ENCODE measurements at regions of chr14 and their contacts with region 1.

Region 1: GRCh38 chr14:105384738-105385637 is 13.3 kb upstream of the TEX22 start:
- DNase-seq: no peak
- H3K4me3 ChIP-seq: no peak overlapping the region
- CTCF ChIP-seq: no peak
- POLR2A ChIP-seq: no peak

Region 2: DNA sequence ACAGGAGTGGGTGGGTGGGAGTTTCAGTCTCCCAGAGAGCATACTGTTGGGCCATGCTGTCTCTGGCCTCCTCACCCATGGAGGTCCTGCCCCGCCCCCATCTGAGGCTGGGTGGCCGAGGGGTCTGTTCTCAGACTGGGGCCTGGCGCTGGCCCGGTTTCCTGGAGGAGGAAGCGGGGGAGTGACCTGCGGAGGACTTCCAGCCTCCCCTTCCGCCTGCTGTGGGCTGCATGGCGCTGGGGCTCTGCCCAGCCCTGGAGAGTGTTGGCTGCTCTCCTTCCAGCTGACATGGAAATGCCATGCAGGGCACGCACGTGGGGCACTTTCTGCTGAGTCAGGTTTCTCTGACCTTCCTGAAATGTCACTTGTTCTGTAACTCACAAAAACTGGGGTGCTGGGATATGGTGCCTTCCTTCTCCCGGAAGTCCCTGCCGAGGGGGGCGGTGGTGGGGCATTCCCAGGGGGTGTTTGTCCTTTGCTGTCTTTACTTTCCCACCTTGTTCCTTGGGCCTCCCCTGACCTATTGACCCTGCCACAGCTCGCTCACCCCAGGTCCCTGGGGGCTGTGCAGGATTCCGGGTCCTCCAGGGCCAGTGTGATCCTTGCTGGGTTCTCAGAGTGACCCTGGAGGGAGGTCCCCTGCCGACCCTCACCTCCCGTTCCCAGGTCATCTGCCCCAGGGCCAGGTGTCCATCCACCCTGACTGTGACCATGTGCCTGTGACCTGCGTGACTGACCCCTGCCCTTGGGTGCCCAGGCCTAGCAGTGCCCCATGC is 46.8 kb before region 1 on chr14:
- intact Hi-C with region 1: no loop called
- DNase-seq: no peak
- H3K4me3 ChIP-seq: no peak overlapping the region
- CTCF ChIP-seq: no peak
- POLR2A ChIP-seq: no peak

Region 3: GRCh38 chr14:105448706-105449111 is 63.7 kb after region 1 on chr14:
- intact Hi-C with region 1: no loop called
- DNase-seq: peak in 1 of 2 donors; percentile 94
- H3K4me3 ChIP-seq: no peak overlapping the region
- CTCF ChIP-seq: peak in 1 of 3 donors; percentile 79
- POLR2A ChIP-seq: no peak

Region 4: GRCh38 chr14:106286697-106287290 is 901.8 kb after region 1 on chr14:
- intact Hi-C with region 1: loop called (anchors 5 kb)
- DNase-seq: no peak
- H3K4me3 ChIP-seq: no peak overlapping the region
- CTCF ChIP-seq: no peak
- POLR2A ChIP-seq: no peak

Measured in lower leg skin (tissue), 4 donors.